Panc1 (cell line): ENCODE measurements at regions of chr14 and their contacts with region 1.

Region 1: GRCh38 chr14:99266181-99267178 is 5.5 kb downstream of the BCL11B start:
- DNase-seq: no peak
- ATAC-seq: peak; percentile 86
- H3K4me3 ChIP-seq: no peak overlapping the region
- H3K27ac ChIP-seq: no peak overlapping the region
- H3K4me1 ChIP-seq: peaks cover 2% of the 10 kb centered on the region; the same call in 1 of the 2 replicates
- H3K27me3 ChIP-seq: peaks cover 11% of the 10 kb centered on the region
- CTCF ChIP-seq: peak; percentile 93

Region 2: DNA sequence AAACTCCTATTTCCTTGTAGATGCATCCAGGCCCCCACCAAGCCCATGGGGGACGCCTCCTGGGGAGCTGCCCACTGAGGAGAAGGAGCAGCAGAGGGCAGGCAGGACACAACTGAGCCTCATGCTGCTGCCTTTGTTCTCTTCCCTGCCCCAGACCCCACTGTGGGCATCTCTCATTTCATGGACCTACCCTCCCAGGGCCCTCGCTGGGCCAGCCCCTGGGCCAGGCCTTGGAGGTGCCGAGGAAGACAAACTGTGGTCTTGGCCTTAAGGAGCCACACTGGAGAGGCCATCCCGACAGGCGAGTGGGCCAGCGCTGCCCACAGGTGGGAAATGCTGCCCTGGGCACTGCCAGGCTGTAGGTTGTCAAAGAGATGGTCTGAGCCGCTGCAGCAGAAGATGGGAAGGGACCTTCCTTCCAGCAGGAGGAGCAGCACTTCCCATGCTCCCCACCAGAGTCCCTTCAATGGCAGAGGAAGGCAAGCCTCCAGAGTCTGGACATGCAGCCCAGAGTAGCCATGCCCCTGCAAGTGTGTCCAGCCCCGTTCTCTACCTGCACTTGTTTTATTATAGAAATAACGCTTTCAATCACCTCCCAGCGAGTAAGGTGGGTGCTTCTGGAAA is 141.9 kb before region 1 on chr14:
- CTCF ChIA-PET with region 1: interaction called, 3 read pairs
- POLR2A ChIA-PET with region 1: no interaction called
- in situ Hi-C with region 1: no loop called
- intact Hi-C with region 1: loop called (anchors 5 kb)
- DNase-seq: no peak
- ATAC-seq: 0 out of 2 replicates have a peak, but pooled peaks have one; percentile 53
- H3K4me3 ChIP-seq: no peak overlapping the region
- H3K27ac ChIP-seq: no peak overlapping the region
- H3K4me1 ChIP-seq: no peaks in the 10 kb centered on the region
- H3K27me3 ChIP-seq: no peaks in the 10 kb centered on the region
- CTCF ChIP-seq: no peak